Endothelial cell of umbilical vein (primary cell): ENCODE measurements at regions of chr1 and their contacts with region 1.

Region 1: DNA sequence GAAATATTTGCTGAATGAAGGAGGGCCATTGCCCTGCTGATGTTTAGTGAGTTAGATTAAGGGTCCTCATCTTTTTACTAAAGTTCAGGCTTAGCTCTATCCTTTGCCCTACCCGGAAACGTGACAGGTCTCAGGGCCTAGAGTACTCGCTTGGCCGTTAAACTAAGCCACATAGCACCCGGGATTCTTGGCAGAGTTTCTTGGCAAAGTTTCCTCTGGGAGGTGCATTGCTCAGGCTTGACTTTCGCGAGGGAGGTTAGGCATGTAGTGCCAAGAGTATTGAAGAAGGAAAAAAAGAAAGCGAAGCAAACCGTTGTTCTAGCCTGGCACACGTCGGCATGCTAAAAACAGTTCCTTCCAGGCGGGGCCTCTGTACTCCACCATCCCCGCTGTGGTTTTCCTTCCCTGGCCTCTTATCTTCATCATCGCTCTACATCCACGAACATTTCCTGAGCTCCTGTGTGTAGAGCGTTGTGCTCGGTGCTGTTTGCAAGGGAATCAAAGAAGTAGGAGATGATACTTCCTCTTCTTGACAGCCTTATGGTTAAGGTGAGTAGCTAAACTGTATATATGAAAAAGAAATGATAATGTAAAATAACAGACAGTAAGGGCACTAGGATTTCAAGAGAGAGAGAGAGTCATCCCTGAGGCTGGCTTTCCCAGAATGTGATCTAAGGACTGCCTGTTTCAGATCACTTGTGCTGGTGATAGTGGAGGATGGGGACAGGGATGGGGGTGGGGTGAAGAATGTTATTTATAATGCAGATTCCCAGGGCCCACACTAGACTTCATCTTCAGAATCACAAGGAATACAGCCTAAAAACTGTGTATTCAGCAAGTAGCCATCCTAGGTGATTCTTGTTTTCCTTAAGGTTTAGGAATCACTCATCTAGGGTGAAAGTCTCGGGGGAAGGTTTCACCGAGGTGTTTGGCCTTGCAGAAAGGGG is 18.8 kb downstream of the RNF220 start:
- DNase-seq: peak; percentile 50
- H3K4me3 ChIP-seq: no peak overlapping the region
- H3K27ac ChIP-seq: no peak overlapping the region
- H3K4me1 ChIP-seq: peaks cover 32% of the 10 kb centered on the region
- H3K27me3 ChIP-seq: peaks cover 25% of the 10 kb centered on the region in 2 experiments
- CTCF ChIP-seq: no peak
- POLR2A ChIP-seq: no peak

Region 2: DNA sequence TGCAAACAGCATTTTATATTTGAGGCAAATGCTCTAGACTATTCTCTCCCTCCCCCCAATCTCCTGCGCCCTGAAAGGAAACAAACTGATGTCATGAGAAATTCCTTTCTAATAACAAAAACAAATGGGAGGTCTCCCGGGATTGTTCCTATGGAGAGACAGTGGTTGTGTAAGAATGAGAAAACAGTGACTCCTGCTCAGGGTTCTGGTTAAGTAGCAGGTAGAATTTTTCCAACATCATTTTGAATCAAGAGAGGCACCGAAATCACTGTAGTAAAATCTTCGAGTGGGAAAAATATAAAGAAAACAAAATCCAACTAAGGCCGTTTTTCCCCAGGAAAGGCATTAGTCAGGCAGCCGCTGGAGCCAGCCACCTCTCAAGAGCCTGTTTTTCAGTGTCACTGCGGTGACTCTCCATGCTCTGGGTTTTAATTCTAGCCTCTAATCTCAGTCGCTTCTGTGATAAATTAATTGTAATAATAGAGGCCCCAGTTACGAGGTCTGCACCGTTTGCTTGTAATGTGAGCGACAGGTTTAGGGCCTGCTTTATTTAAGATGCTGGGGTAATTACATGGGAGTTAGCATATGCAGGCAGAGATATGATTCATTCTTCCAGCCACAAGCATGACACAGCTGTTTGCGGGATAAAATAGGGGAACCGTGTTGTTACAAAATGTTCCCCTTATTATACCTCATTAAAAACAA is 61.5 kb after region 1 on chr1:
- CTCF ChIA-PET with region 1: no interaction called
- POLR2A ChIA-PET with region 1: no interaction called
- dilution Hi-C with region 1: no loop called
- intact Hi-C with region 1: loop called (anchors 1 kb)
- DNase-seq: peak; percentile 90
- H3K4me3 ChIP-seq: no peak overlapping the region
- H3K27ac ChIP-seq: peak overlapping the region; percentile 97
- H3K4me1 ChIP-seq: peaks cover 25% of the 10 kb centered on the region
- H3K27me3 ChIP-seq: peaks cover 0 to 3% of the 10 kb centered on the region in 2 experiments
- CTCF ChIP-seq: no peak
- POLR2A ChIP-seq: peak; percentile 14

Region 3: DNA sequence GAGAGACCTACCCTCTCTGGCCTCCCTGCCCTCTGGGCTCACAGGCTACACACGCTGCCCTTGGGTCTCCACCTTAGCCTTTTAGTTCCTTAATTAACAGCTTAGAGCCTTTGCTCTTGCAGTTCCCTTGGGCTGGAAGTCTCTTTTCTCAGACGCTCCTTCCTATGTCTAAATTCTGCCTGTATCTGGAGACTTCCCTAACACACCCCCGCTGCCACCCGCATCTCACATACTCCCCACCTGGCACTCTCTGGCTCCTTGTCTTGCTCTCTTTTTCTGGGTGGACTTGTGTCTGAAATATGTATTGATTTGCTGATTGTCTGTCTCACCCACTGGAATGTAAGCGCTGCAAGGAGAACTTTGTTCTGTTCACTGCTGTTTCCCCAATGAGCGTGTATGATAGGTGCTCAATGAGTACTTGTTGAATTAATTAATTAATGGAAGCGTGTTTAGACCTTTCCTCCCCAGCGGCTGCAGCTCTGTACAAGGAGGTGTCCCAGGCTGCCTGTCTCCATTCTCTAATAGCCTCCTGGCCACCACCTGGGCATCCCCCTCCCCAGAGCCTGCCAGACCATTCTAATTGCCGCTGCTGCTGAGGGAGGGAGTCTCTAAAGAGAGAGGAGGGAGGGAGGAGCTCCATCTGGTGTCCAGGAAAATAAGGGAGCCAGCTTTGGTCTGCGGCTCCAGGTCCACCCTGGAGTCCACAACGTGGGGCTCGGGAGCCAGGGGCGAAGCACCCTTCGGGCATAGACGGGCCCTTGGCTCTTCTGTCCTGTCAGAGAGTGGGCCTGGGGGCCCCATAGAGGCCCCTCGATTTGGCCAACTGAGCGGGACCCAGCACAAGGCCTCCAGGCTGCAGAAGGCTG is 76.5 kb after region 1 on chr1:
- CTCF ChIA-PET with region 1: interaction called, 4 read pairs
- POLR2A ChIA-PET with region 1: interaction called, 3 read pairs
- dilution Hi-C with region 1: no loop called
- intact Hi-C with region 1: loop called (anchors 2 kb)
- DNase-seq: peak; percentile 59
- H3K4me3 ChIP-seq: no peak overlapping the region
- H3K27ac ChIP-seq: no peak overlapping the region
- H3K4me1 ChIP-seq: no peaks in the 10 kb centered on the region
- H3K27me3 ChIP-seq: peaks cover 26 to 29% of the 10 kb centered on the region in 2 experiments
- CTCF ChIP-seq: peak in 1 of 2 donors; percentile 48
- POLR2A ChIP-seq: no peak